Left ventricle myocardium inferior (tissue), 1 donor: ENCODE measurements at regions of chr10 and their contacts with region 1.

Region 1: GRCh38 chr10:29839826-29840515 is 205.2 kb upstream of the SVIL start:
- DNase-seq: no peak
- H3K4me3 ChIP-seq: no peak overlapping the region
- H3K27ac ChIP-seq: peak overlapping the region; percentile 91
- H3K4me1 ChIP-seq: peaks cover 66% of the 10 kb centered on the region
- H3K27me3 ChIP-seq: no peaks in the 10 kb centered on the region
- CTCF ChIP-seq: no peak

Region 2: DNA sequence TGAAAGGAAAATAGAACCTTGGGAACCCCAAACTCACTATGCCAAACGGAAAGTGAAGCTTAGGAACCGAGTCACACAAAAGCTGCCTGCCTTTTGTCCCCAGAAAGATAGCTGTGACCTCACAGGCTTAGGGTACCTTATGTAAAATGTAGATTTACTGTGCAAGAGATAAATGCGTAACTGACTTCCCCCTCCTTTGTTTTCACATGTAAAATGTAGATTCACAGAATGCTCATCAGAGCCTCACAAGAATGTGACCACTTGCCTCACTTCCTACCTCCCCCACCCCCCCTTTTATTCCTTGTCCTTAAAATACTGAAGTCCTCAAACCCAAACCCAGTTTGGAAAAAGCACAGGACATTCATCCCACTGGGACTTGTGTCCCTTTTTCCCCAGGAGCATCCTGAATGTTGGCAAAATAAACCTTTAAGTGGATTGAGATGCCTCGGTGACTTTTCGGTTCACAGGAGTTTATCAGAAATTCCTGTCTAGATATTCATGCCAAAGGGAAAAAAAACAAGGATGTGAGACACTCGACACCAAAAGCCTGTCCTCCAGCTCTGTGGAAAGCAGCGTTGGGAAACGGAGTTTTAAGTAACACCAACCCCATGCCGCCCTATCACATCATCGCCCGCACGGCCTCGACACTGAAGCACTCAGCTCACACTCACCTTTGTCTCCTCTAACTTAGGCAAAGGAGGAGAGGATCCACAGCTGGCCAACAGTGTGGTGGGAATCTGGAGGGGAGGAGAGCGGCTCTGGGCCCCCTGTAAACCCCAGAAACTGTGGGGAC is 251.1 kb before region 1 on chr10:
- intact Hi-C with region 1: no loop called
- DNase-seq: no peak
- H3K4me3 ChIP-seq: peak overlapping the region; percentile 38
- H3K27ac ChIP-seq: peak overlapping the region; percentile 80
- H3K4me1 ChIP-seq: peaks cover 92% of the 10 kb centered on the region
- H3K27me3 ChIP-seq: no peaks in the 10 kb centered on the region
- CTCF ChIP-seq: no peak

Region 3: DNA sequence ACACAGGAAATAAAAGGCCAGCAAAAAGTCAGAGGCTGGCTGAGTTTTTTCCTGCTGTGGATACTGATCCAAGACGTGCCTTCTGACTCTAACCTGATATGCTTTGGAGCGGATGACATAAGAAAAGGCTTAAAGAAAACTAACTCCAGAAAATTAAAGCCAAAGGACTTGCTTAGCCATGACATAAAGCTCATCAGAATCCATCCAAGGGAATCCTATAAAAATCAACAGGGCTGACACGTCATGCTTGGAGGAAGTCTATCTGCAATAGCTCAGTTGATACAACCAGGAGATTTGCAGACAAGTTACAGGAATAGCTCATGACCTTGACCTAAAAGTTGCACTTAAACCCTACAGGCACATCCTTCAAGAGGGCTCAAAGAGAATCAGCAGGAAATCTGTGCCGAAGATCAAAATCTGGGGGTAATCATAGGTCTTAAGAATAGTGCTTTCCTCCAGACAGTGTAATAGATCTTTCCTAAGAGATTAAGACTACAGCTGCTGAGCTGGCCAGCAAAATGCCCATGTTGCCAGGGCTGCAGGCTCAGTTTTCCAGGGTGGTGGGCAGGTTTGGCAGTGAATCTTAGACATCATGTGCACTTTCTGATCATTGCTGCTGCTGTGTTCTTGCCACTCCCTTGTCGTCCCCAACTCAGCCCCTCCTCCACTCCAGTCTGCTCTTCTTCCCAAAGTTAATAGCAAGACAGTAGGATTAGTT is 93.7 kb before region 1 on chr10:
- intact Hi-C with region 1: loop called (anchors 10 kb)
- DNase-seq: no peak
- H3K4me3 ChIP-seq: no peak overlapping the region
- H3K27ac ChIP-seq: no peak overlapping the region
- H3K4me1 ChIP-seq: peaks cover 17% of the 10 kb centered on the region
- H3K27me3 ChIP-seq: no peaks in the 10 kb centered on the region
- CTCF ChIP-seq: no peak